A673 (cell line): ENCODE measurements at regions of chr7 and their contacts with region 1.

Region 1: DNA sequence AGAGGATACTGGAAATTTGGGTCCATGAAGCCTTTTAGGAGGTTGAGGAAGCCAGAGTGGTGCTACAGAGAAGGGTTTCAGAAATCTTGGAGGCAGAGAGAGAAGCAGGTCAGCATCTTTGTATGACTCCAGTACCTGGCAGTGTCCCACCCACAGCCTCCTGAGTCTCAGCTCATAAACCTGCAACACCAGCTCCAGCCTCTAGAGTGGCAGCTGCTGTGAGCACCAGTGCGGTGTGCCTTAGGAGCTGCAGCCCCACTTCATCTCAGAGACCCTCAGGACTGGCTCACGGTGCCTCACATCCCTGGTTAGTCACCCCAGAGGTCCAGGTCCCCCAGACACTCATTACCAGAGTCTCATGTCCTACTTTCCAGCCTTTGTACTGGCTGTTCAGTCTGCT is 84.8 kb upstream of the PRKAR2B start:
- DNase-seq: no peak
- H3K4me3 ChIP-seq: no peak overlapping the region
- H3K27ac ChIP-seq: no peak overlapping the region
- H3K4me1 ChIP-seq: no peaks in the 10 kb centered on the region
- H3K27me3 ChIP-seq: no peaks in the 10 kb centered on the region
- CTCF ChIP-seq: peak; percentile 41

Region 2: GRCh38 chr7:105795390-105795729 is 1164.4 kb before region 1 on chr7:
- CTCF ChIA-PET with region 1: no interaction called
- POLR2A ChIA-PET with region 1: no interaction called
- intact Hi-C with region 1: no loop called
- DNase-seq: no peak
- H3K4me3 ChIP-seq: no peak overlapping the region
- H3K27ac ChIP-seq: no peak overlapping the region
- H3K4me1 ChIP-seq: no peaks in the 10 kb centered on the region
- H3K27me3 ChIP-seq: no peaks in the 10 kb centered on the region
- CTCF ChIP-seq: no peak

Region 3: DNA sequence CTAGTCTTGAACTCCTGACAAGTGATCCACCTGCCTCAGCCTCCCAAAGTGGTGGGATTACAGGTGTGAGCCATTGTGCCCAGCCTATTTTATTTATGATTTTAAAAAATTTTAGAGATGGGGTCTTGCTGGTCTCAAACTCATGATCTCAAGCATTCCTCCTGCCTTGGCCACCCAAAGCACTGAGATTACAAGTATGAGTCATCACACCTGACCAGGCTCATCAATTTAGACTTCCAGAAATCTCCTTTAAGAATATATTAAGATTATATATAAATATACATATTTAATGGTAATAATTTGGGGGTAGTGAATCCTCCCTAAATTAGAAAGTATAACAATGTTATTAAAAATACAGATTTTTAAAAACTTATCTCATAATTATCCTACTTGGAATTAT is 1014.1 kb after region 1 on chr7:
- CTCF ChIA-PET with region 1: no interaction called
- POLR2A ChIA-PET with region 1: interaction called, 12 read pairs
- intact Hi-C with region 1: no loop called
- DNase-seq: no peak
- H3K4me3 ChIP-seq: no peak overlapping the region
- H3K27ac ChIP-seq: no peak overlapping the region
- H3K4me1 ChIP-seq: peaks cover 24% of the 10 kb centered on the region
- H3K27me3 ChIP-seq: no peaks in the 10 kb centered on the region
- CTCF ChIP-seq: no peak